Panc1 (cell line): ENCODE measurements at regions of chr18 and their contacts with region 1.

Region 1: GRCh38 chr18:63339920-63340484 is 20.4 kb upstream of the BCL2 start:
- DNase-seq: no peak
- ATAC-seq: no peak
- H3K4me3 ChIP-seq: no peak overlapping the region
- H3K27ac ChIP-seq: no peak overlapping the region
- H3K4me1 ChIP-seq: no peaks in the 10 kb centered on the region
- H3K27me3 ChIP-seq: no peaks in the 10 kb centered on the region
- CTCF ChIP-seq: peak; percentile 51; the same call in 1 of the 2 replicates

Region 2: DNA sequence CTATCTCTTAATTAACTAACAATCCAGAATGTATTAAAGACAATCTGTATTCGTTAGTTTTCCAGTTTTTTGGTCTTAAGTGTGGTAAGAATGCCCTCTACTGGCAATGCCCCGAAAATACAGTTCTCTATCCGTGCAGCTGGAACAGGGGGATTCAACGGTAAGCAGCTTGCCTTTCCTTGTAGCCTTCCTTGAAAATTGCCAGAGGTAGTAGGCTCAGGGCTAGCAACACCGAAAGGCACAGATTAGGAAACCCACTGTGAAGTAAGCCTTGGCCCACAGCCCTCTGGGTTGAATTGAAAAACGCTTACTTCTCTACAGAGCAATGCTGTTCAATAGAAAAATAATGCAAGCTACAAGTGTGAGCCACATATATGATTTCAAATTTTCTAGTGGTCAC is 99.3 kb after region 1 on chr18:
- CTCF ChIA-PET with region 1: interaction called, 4 read pairs
- POLR2A ChIA-PET with region 1: no interaction called
- in situ Hi-C with region 1: no loop called
- intact Hi-C with region 1: loop called (anchors 1 kb)
- DNase-seq: peak; percentile 61
- ATAC-seq: peak; percentile 78; the same call in 1 of the 2 replicates
- H3K4me3 ChIP-seq: no peak overlapping the region
- H3K27ac ChIP-seq: no peak overlapping the region
- H3K4me1 ChIP-seq: no peaks in the 10 kb centered on the region
- H3K27me3 ChIP-seq: no peaks in the 10 kb centered on the region
- CTCF ChIP-seq: peak; percentile 67